ENCODE measurements at regions of chr13 and their contacts with region 1.

Region 1: DNA sequence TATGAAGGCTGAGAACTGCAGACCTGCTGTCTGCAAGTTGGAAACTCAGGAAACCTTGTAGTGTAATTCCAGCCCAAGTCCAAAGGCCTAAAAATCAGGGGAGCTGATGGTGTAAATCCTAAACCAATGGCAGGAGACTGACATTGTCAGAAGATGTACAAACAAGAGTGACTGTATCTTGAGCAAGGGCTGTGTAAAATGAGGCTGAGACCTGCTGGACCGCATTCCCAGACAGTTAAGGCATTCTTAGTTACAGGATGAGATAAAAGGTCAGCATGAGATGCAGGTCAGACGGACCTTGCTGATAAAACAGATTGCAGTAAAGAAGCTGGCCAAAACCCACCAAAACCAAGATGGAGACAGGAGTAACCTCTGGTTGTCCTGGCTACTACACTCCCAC is 147.7 kb downstream of the COG6 start:
- DNase-seq: peak; percentile 21 to 62
- H3K4me3 ChIP-seq: no peak overlapping the region
- H3K27ac ChIP-seq: no peak overlapping the region
- H3K4me1 ChIP-seq: peaks cover 22% of the 10 kb centered on the region
- H3K27me3 ChIP-seq: no peaks in the 10 kb centered on the region
- CTCF ChIP-seq: no peak

Region 2: DNA sequence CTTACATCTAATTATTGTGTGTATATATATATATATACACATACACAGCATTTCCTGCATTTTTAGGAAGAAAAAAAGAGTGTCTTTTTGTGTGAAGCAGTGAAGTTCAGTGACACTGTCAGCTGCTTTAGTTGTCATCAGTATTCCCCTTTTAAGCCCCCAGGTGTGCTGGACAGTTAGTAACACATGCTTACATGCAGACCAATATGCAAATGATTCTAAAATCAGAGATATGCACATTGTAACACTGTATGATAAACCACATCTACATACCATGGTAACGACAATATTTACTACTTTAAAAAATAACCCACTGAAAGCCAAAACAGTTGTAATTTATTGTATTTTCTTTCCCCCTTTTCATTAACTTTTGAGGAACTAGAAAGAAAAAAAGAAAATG is 217.0 kb before region 1 on chr13:
- CTCF ChIA-PET with region 1: no interaction called
- POLR2A ChIA-PET with region 1: no interaction called
- intact Hi-C with region 1: no loop called
- DNase-seq: no peak
- H3K4me3 ChIP-seq: no peak overlapping the region
- H3K27ac ChIP-seq: no peak overlapping the region
- H3K4me1 ChIP-seq: no peaks in the 10 kb centered on the region
- H3K27me3 ChIP-seq: no peaks in the 10 kb centered on the region
- CTCF ChIP-seq: no peak

Region 3: GRCh38 chr13:39835253-39835652 is 32.1 kb after region 1 on chr13:
- CTCF ChIA-PET with region 1: no interaction called
- POLR2A ChIA-PET with region 1: no interaction called
- intact Hi-C with region 1: loop called (anchors 5 kb)
- DNase-seq: peak; percentile 27 to 77
- H3K4me3 ChIP-seq: peak overlapping the region; percentile 47
- H3K27ac ChIP-seq: peak overlapping the region; percentile 76
- H3K4me1 ChIP-seq: peaks cover 33% of the 10 kb centered on the region
- H3K27me3 ChIP-seq: no peaks in the 10 kb centered on the region
- CTCF ChIP-seq: no peak